Activated naive CD4-positive, alpha-beta T cell treated with anti-CD3 and anti-CD28 coated beads, Interleukin-2, amount 10 ng/mL, durations not matched to agents 7 days and 5 days (primary cell): ENCODE measurements at regions of chr17 and their contacts with region 1.

Region 1: DNA sequence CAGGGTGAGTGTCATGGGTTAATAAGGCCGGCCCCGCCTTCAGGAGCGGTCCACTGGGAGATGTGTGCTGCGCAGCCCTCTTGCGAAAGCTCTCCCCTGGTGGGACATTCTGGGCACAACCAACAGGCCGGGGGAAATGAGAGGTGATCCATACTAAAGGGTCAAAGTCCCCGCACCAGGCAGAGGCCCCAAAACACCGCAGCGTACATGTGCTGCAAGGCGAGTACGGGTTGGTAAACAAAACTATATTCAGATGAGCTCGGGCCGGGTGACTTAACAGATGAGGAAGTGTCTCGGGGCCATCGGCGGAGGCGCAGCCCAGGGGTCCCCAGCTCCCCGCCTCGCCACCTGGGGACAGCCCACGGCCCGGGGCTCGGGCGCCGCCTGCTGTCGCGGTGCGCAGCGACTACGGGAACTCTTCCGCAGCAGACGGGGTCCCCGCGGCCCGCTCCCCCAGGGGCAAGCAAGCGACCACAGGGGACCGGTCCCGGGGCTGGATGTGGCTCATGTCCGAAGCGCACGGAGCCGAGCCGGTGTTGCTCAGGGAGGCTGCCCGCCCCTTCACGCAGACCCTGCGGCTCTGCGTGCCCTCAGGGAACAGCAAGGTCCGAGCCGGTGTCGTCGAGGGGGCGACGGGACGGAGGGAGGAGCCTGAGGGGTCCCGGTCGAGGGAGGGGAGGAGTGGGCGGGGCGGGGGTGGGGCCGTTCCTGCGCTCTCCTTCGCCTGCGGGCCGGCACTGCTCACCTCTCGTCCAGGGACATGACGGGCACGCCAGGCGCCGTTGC is at the start of gene RAB37:
- DNase-seq: peak; percentile 66
- H3K4me3 Mint-ChIP-seq: peak within 1 kb of the TSS; percentile 92
- H3K27ac Mint-ChIP-seq: peak within 1 kb of the TSS; percentile 96
- H3K4me1 Mint-ChIP-seq: peaks cover 59% of the 10 kb centered on the region
- H3K27me3 Mint-ChIP-seq: peaks cover 6% of the 10 kb centered on the region

Region 2: DNA sequence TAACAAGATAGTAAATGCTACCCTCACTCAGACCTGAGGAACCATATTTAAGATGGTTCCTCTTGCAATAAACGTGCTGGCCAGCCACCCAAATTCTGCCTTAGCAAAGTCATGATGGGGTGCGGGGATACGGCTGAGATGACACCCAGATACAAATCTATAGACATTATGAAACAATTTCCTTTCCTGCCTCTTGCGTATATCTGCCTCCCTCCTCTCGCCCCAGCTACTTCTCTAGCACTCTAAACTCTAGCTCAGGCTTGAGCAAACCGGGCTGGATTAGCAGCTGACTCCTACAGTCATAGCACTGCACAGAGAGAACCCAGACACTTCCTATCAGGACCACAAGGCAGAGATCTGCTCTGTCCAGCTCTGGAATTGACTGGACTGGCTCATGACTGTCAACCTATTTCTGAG is 46.3 kb before region 1 on chr17:
- CTCF ChIA-PET with region 1: interaction called, 16 read pairs
- DNase-seq: no peak
- H3K4me3 Mint-ChIP-seq: no peak overlapping the region
- H3K27ac Mint-ChIP-seq: no peak overlapping the region
- H3K4me1 Mint-ChIP-seq: peaks cover 26% of the 10 kb centered on the region
- H3K27me3 Mint-ChIP-seq: peaks cover 58% of the 10 kb centered on the region

Region 3: GRCh38 chr17:74748529-74749365 is 12.0 kb after region 1 on chr17 and contains the start of gene NHERF1:
- CTCF ChIA-PET with region 1: interaction called, 20 read pairs
- DNase-seq: peak; percentile 95
- H3K4me3 Mint-ChIP-seq: peak within 1 kb of the TSS; percentile 99
- H3K27ac Mint-ChIP-seq: peak within 1 kb of the TSS; percentile 88
- H3K4me1 Mint-ChIP-seq: peaks cover 64% of the 10 kb centered on the region
- H3K27me3 Mint-ChIP-seq: no peaks in the 10 kb centered on the region

Region 4: DNA sequence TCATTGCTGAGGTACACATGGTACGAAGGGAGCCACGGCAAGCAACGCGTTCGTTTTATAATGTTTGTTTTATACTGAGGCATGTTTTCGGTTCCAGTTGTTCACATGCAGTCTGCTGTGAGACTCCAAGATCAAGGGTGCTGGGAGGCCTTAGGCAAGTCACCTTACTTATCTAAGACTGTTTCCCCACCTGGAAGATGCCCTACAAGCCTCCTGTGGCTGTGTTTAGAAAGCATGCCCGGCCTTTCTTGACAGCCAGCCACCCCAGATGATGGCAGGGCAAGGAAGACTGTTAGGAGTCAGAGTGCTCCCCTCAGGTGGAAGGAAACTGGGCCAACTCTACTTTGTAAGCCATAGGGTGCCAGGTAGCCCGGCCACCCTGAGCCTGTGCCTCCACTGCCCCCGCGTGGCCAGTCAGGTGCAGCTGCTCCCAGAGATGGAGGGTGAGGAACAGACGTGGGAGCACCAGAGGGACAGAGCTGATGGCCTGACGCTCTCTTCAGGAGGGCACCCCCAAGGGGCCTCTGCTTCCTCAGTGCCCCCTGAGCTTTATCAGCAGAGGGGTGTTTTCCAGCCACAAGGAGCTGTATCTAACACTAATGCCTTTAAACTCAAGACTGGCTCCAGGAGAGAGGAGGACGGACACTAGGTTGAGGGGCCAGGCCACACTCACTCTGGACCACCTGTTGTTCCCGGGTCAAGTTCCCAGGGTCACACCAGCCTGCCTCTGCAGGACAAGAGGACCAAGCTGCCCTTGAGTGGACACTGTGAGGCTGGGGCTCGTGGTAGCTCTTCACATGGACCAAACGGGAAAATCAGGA is 34.0 kb after region 1 on chr17:
- CTCF ChIA-PET with region 1: interaction called, 16 read pairs
- DNase-seq: peak; percentile 83
- H3K4me3 Mint-ChIP-seq: no peak overlapping the region
- H3K27ac Mint-ChIP-seq: peak overlapping the region; percentile 80
- H3K4me1 Mint-ChIP-seq: peaks cover 47% of the 10 kb centered on the region
- H3K27me3 Mint-ChIP-seq: no peaks in the 10 kb centered on the region

Region 5: DNA sequence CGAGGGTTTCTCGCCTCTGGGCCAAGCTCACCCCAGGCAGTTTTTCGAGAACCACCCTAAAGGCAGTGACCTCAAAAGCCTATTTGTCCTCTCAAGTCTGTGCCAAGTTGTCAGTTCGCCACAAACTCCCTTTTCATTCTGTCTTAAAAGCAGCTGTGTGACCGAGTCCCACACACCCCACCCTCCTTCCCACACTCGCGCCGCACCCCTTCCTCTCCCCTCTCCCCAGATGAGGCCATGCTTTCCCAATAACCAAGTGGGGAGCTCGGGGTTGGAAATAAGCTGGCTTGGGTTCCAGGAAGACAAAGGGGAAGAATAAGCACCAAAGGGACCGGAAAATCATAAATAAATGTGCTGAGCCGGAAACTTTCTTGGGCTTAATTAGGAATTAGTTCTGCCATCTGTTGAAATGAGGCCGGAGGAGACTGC is 86.2 kb after region 1 on chr17:
- CTCF ChIA-PET with region 1: no interaction called
- DNase-seq: no peak
- H3K4me3 Mint-ChIP-seq: no peak overlapping the region
- H3K27ac Mint-ChIP-seq: no peak overlapping the region
- H3K4me1 Mint-ChIP-seq: no peaks in the 10 kb centered on the region
- H3K27me3 Mint-ChIP-seq: no peaks in the 10 kb centered on the region